Ascending aorta (tissue), 2 donors: ENCODE measurements at regions of chr16 and their contacts with region 1.

Region 1: DNA sequence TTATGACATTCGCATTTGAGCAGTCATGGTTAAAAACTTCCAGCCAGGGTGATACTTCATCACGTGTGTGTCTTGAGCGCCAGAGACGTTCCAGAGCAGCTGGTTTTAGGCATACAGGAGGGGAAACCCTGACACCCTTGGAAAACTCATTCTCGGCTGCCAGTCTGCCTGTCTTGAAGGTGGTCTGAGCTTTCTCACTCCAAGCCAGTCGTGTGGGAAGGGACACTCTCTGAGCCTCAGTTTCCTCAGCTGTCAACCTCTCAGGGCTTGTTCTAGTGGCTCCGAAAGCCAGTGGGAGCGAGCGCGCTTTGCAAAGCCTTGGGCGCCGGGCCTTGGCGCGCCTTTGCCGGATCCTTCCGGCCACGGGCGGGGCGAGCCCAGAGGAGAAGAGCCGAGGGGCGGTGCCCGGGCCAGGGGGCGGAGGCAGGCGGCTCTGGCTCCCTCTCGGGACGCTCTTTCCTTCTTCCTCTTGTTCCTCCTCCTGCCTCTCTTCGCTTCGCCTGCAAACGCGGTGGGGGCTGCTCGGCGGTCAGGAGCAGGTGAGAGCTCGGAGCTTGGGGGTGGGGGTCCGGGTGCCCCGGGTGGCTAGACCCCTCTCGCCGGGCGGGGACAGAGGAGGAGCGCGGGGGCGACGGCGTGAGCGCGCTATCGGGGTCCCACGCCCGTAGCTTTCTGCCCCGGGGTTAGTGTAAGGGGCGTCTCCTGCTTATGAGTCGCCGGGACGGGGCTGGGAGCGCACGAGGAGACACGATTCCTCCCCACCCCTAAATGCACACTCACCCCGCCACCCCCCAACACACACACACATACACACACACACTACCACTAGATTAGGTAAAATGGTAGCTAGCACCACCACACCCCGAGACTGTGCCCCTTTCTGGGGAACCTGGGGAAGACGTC is at the start of gene LDAF1:
- DNase-seq: peak; percentile 28 to 91
- H3K4me3 ChIP-seq: peak within 1 kb of the TSS; percentile 85 to 87
- H3K27ac ChIP-seq: peak within 1 kb of the TSS; percentile 87 to 91
- H3K4me1 ChIP-seq: peaks cover 15 to 22% of the 10 kb centered on the region in 2 donors
- H3K27me3 ChIP-seq: no peaks in the 10 kb centered on the region
- CTCF ChIP-seq: no peak
- total RNA-seq, gene LDAF1: 23.5 TPM

Region 2: GRCh38 chr16:20611975-20612481 is 546.4 kb before region 1 on chr16:
- intact Hi-C with region 1: loop called (anchors 10 kb)
- DNase-seq: peak in 1 of 2 donors; percentile 87
- H3K4me3 ChIP-seq: peak overlapping the region; percentile 37 to 49
- H3K27ac ChIP-seq: peak overlapping the region; percentile 98 to 99
- H3K4me1 ChIP-seq: peaks cover 6 to 19% of the 10 kb centered on the region in 2 donors
- H3K27me3 ChIP-seq: no peaks in the 10 kb centered on the region
- CTCF ChIP-seq: no peak

Region 3: GRCh38 chr16:21184834-21185233 is 26.4 kb after region 1 on chr16:
- intact Hi-C with region 1: loop called (anchors 1 kb)
- DNase-seq: no peak
- H3K4me3 ChIP-seq: no peak overlapping the region
- H3K27ac ChIP-seq: no peak overlapping the region
- H3K4me1 ChIP-seq: peaks cover 0 to 9% of the 10 kb centered on the region in 2 donors
- H3K27me3 ChIP-seq: no peaks in the 10 kb centered on the region
- CTCF ChIP-seq: no peak

Region 4: DNA sequence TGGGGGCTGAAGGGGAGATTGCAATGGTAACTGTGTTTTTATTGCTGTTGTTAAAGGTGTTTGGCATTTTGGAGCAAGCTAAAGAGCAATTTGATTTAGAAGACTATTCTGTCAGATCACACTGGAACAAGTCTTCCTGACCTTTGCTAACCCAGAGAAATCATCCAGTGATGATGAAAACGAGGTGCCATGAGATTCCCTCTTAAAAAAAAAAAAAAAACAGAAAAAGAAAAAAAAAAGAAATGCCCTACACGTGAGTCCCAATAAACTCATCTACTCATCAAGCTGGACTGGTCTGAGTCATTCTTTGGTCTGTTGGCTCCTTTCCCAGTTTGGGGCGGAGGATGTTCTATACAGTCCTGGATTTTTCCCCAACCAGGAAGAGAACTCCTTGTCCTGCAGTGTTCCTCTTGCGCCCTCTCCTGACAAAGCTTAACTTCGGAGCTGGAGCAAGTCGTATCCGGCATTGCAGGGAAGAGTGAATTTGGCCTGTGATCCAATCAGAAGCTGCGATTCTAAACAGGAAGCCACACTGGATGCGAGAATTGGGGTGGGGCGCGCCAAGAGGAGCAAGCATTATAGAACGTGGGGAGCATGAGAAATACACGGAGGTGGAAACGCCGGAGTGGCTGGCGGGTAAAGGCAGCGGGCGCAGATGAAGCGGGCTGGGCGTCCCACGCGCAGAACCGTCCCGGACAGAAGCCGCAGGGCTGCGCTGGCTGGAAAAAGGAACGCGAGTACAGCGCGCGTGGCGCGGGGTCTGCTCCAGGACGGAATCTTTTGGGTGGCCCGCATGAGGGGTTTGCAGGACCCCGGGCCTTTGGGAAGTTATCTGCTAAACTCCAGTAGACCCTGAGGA is 142.1 kb after region 1 on chr16:
- intact Hi-C with region 1: loop called (anchors 1 kb)
- DNase-seq: peak; percentile 92 to 99
- H3K4me3 ChIP-seq: peak overlapping the region; percentile 72 to 79
- H3K27ac ChIP-seq: peak overlapping the region; percentile 82 to 83
- H3K4me1 ChIP-seq: peaks cover 0 to 4% of the 10 kb centered on the region in 2 donors
- H3K27me3 ChIP-seq: no peaks in the 10 kb centered on the region
- CTCF ChIP-seq: peak; percentile 84 to 88 (median 87)

Region 5: DNA sequence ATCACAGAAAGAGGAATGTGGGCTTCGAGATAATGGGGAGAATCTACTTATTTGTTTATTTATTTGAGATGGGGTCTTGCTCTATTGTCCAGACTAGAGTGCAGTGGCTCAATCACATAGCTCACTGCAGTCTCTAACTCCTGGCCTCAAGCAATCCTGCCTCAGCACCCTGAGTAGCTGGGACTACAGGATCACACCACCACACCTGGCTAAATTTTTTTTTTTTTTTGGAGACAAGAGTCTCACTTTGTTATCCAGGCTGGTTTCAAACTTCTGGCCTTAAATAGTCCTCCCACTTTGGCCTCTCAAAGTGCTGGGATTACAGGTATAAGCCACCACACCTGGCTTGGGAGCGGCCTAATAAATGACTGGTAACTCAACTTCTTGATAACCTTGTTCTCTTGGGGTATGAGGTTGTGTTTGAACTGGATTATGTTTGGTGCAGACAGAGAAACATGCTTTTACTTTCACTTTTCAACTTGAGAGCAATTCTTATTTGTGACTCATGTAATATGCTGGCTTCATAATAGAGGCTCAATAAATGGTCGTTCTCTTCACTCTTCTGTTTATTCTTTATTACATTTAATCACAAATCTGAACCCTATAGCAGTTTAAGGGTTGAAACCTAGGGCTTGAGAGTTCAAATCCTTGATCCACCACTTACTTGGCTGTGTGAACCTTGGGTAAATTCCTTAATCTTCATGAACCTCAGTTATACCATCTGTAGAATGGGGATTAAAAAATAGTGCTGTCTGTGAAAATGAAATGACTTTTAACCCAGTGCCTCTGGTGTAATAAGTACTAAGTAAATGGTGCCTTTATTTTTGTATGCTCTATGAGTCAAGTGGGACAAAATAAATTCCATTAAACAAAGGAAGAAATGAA is 1526.4 kb after region 1 on chr16:
- intact Hi-C with region 1: loop called (anchors 2 kb)
- DNase-seq: peak in 1 of 2 donors; percentile 64
- H3K4me3 ChIP-seq: no peak overlapping the region
- H3K27ac ChIP-seq: peak overlapping the region; percentile 67 to 71
- H3K4me1 ChIP-seq: peaks cover 7 to 16% of the 10 kb centered on the region in 2 donors
- H3K27me3 ChIP-seq: no peaks in the 10 kb centered on the region
- CTCF ChIP-seq: no peak